K562 (cell line): ENCODE measurements at regions of chr7 and their contacts with region 1.

Region 1: GRCh38 chr7:106588422-106589198 is 72.3 kb downstream of the CCDC71L start:
- DNase-seq: peak in 3 of 4 experiments; percentile 45 to 67 (median 54)
- ATAC-seq: peak; percentile 63
- H3K4me3 ChIP-seq: no peak overlapping the region
- H3K27ac ChIP-seq: peak overlapping the region; percentile 15; the same call in 1 of the 3 replicates
- H3K4me1 ChIP-seq: peaks cover 11 to 62% of the 10 kb centered on the region in 2 experiments
- H3K27me3 ChIP-seq: no peaks in the 10 kb centered on the region
- CTCF ChIP-seq: no peak
- EP300 ChIP-seq: peak; percentile 16; the same call in 1 of the 2 replicates
- POLR2A ChIP-seq: no peak
- RAD21 ChIP-seq: no peak

Region 2: GRCh38 chr7:106485031-106485551 is 103.5 kb before region 1 on chr7:
- CTCF ChIA-PET with region 1: no interaction called
- POLR2A ChIA-PET with region 1: no interaction called
- in situ Hi-C with region 1: no loop called
- intact Hi-C with region 1: no loop called
- DNase-seq: no peak
- ATAC-seq: peak; percentile 37
- H3K4me3 ChIP-seq: no peak overlapping the region
- H3K27ac ChIP-seq: no peak overlapping the region
- H3K4me1 ChIP-seq: peaks cover 8 to 27% of the 10 kb centered on the region in 2 experiments; a peak in 3 of 5 replicates
- H3K27me3 ChIP-seq: no peaks in the 10 kb centered on the region
- CTCF ChIP-seq: no peak
- EP300 ChIP-seq: no peak
- POLR2A ChIP-seq: no peak
- RAD21 ChIP-seq: no peak

Region 3: DNA sequence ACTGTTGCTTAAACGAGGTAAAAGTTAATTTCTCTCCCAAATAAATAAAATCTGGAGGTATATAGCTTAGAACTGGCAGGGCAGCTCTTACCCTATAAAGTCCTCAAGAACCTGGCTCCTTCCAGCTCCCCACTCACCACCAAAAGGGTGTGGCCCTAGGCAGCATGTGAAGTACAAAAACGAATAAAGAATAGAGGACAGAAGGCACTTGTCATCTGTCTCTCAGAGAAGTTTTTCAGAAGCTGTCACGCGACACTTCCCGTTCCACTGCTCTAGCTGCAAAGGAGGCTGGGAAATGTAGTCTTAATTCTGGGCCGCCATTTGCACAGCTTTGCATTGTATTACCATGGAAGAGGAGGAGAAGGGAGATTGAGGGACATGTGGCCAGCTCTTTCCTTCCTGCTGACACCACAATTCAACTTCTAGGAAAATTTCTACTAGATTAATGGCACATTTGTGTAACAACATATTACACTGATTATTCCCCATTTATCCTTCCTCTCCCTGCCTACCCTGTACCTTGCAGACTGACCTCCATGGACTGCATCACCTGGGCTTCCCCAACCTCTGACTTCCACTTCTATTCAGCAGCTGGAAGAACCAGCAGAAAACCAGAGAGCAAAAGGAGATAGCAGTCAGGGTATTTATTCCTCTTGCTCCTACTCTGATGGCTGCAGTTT is 10.2 kb after region 1 on chr7:
- CTCF ChIA-PET with region 1: no interaction called
- POLR2A ChIA-PET with region 1: interaction called, 20 read pairs
- in situ Hi-C with region 1: no loop called
- intact Hi-C with region 1: no loop called
- DNase-seq: peak; percentile 83 to 97 (median 87)
- ATAC-seq: peak; percentile 97
- H3K4me3 ChIP-seq: no peak overlapping the region
- H3K27ac ChIP-seq: peak overlapping the region; percentile 62
- H3K4me1 ChIP-seq: peaks cover 19 to 56% of the 10 kb centered on the region in 2 experiments
- H3K27me3 ChIP-seq: no peaks in the 10 kb centered on the region
- CTCF ChIP-seq: no peak
- EP300 ChIP-seq: peak; percentile 55; the same call in 1 of the 2 replicates
- POLR2A ChIP-seq: no peak
- RAD21 ChIP-seq: no peak